Naive thymus-derived CD4-positive, alpha-beta T cell (primary cell): ENCODE measurements at regions of chr3 and their contacts with region 1.

Region 1: GRCh38 chr3:139427283-139427993 is 38.0 kb upstream of the COPB2 start:
- DNase-seq: peak in 6 of 9 donors; percentile 20 to 59 (median 47)
- ATAC-seq: peak; percentile 68
- H3K4me3 ChIP-seq: no peak overlapping the region
- H3K4me3 Mint-ChIP-seq: no peak overlapping the region
- H3K27ac ChIP-seq: no peak overlapping the region
- H3K27ac Mint-ChIP-seq: no peak overlapping the region
- H3K4me1 ChIP-seq: no peaks in the 10 kb centered on the region
- H3K4me1 Mint-ChIP-seq: no peaks in the 10 kb centered on the region
- H3K27me3 ChIP-seq: no peaks in the 10 kb centered on the region
- H3K27me3 Mint-ChIP-seq: no peaks in the 10 kb centered on the region

Region 2: DNA sequence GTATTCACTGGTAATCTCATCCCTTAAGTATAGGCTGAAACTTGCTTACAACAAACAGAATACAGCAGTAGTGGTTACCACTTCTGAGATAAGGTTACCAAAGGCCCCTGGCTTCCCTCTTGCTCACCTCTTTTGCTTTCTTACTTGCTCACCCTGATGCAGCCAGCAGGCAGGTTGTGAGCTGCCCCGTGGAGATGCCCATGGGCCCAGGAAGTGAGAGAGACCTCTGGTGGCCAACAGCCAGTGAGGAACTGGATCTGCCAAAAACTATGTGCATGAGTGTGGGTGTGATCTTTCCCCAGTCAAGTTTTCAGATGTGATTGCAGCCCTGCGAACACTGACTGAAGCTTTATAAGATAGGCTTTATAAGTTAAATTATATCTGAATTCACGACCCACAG is 201.6 kb after region 1 on chr3:
- CTCF ChIA-PET with region 1: no interaction called
- POLR2A ChIA-PET with region 1: no interaction called
- intact Hi-C with region 1: loop called in 1 of 2 experiments (anchors 5 kb)
- DNase-seq: no peak
- ATAC-seq: peak; percentile 51
- H3K4me3 ChIP-seq: no peak overlapping the region
- H3K4me3 Mint-ChIP-seq: no peak overlapping the region
- H3K27ac ChIP-seq: no peak overlapping the region
- H3K27ac Mint-ChIP-seq: no peak overlapping the region
- H3K4me1 ChIP-seq: no peaks in the 10 kb centered on the region
- H3K4me1 Mint-ChIP-seq: no peaks in the 10 kb centered on the region
- H3K27me3 ChIP-seq: no peaks in the 10 kb centered on the region
- H3K27me3 Mint-ChIP-seq: no peaks in the 10 kb centered on the region

Region 3: GRCh38 chr3:139935016-139935865 is 507.8 kb after region 1 on chr3 and contains the start of gene CLSTN2:
- CTCF ChIA-PET with region 1: no interaction called
- POLR2A ChIA-PET with region 1: no interaction called
- intact Hi-C with region 1: loop called in 1 of 2 experiments (anchors 10 kb)
- DNase-seq: peak in 1 of 9 donors; percentile 33
- ATAC-seq: peak; percentile 36
- H3K4me3 ChIP-seq: no peak within 1 kb of the TSS
- H3K4me3 Mint-ChIP-seq: peak within 1 kb of the TSS in 2 of 10 donors; percentile 38 to 41
- H3K27ac ChIP-seq: no peak within 1 kb of the TSS
- H3K27ac Mint-ChIP-seq: no peak within 1 kb of the TSS
- H3K4me1 ChIP-seq: no peaks in the 10 kb centered on the region
- H3K4me1 Mint-ChIP-seq: peaks cover 0 to 11% (median 3%) of the 10 kb centered on the region in 7 donors
- H3K27me3 ChIP-seq: no peaks in the 10 kb centered on the region
- H3K27me3 Mint-ChIP-seq: peaks cover 47 to 69% (median 56%) of the 10 kb centered on the region in 5 donors
- total RNA-seq, gene CLSTN2: 0.02 TPM in 1 of 5 experiments, not detected in the others

Region 4: GRCh38 chr3:140736863-140737460 is 1309.5 kb after region 1 on chr3:
- CTCF ChIA-PET with region 1: no interaction called
- POLR2A ChIA-PET with region 1: no interaction called
- intact Hi-C with region 1: loop called in 1 of 2 experiments (anchors 5 kb)
- DNase-seq: no peak
- ATAC-seq: no peak
- H3K4me3 ChIP-seq: no peak overlapping the region
- H3K4me3 Mint-ChIP-seq: no peak overlapping the region
- H3K27ac ChIP-seq: no peak overlapping the region
- H3K27ac Mint-ChIP-seq: no peak overlapping the region
- H3K4me1 ChIP-seq: no peaks in the 10 kb centered on the region
- H3K4me1 Mint-ChIP-seq: peaks cover 0 to 5% (median 0%) of the 10 kb centered on the region in 7 donors
- H3K27me3 ChIP-seq: no peaks in the 10 kb centered on the region
- H3K27me3 Mint-ChIP-seq: peaks cover 12 to 25% (median 18%) of the 10 kb centered on the region in 5 donors